Heart left ventricle (tissue), 16 donors: ENCODE measurements at regions of chr9 and their contacts with region 1.

Region 1: GRCh38 chr9:30058463-30058862 is 2326.0 kb upstream of the ACO1 start:
- DNase-seq: no peak
- ATAC-seq: no peak
- H3K4me3 ChIP-seq: no peak overlapping the region
- H3K27ac ChIP-seq: no peak overlapping the region
- H3K4me1 ChIP-seq: no peaks in the 10 kb centered on the region
- H3K27me3 ChIP-seq: no peaks in the 10 kb centered on the region
- CTCF ChIP-seq: no peak
- POLR2A ChIP-seq: no peak

Region 2: DNA sequence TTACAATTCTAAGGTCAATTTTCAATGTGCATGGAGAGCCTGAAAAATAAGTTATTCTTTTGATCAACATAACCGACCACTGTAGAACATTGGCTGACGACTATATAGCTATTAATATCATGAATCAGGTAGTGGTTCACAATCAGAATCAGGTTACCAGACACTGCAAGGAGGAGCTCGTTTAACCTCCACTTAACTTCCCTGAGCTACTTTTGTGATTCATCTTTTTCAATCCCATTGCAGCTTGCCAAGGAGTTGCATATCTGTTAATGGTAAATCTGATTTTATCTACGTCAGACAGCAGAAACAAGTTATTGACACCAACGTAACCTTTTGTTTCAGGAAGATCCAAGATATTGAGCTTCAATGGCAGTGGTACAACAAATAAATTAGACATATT is 62.2 kb after region 1 on chr9:
- intact Hi-C with region 1: loop called in 1 of 10 experiments (anchors 10 kb)
- DNase-seq: no peak
- ATAC-seq: no peak
- H3K4me3 ChIP-seq: no peak overlapping the region
- H3K27ac ChIP-seq: no peak overlapping the region
- H3K4me1 ChIP-seq: no peaks in the 10 kb centered on the region
- H3K27me3 ChIP-seq: no peaks in the 10 kb centered on the region
- CTCF ChIP-seq: no peak
- POLR2A ChIP-seq: no peak

Region 3: DNA sequence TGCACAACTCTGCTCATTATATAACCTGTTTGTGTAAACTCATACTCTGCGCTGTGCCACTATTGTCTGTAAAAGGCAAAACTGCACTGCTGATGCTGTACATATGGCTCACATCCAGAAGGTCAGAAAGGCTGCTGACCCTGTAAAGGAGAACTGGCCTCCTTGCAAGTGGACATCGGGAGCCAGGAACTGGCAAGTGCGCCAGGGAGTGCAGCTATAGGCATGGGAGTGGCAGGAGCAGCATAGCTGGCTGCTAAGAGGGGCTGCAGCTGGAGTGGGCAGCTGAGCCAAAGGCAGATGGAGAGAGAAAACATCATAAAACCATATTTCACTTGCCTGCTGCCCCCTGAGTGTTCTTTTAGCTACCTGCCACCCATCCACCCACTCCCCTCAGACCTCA is 142.6 kb after region 1 on chr9:
- intact Hi-C with region 1: no loop called
- DNase-seq: no peak
- ATAC-seq: no peak
- H3K4me3 ChIP-seq: no peak overlapping the region
- H3K27ac ChIP-seq: no peak overlapping the region
- H3K4me1 ChIP-seq: no peaks in the 10 kb centered on the region
- H3K27me3 ChIP-seq: no peaks in the 10 kb centered on the region
- CTCF ChIP-seq: no peak
- POLR2A ChIP-seq: no peak

Region 4: GRCh38 chr9:30301271-30301963 is 243.0 kb after region 1 on chr9:
- intact Hi-C with region 1: no loop called
- DNase-seq: peak in 1 of 5 donors; percentile 24
- ATAC-seq: no peak
- H3K4me3 ChIP-seq: no peak overlapping the region
- H3K27ac ChIP-seq: peak overlapping the region in 1 of 12 donors; percentile 77
- H3K4me1 ChIP-seq: no peaks in the 10 kb centered on the region
- H3K27me3 ChIP-seq: no peaks in the 10 kb centered on the region
- CTCF ChIP-seq: no peak
- POLR2A ChIP-seq: no peak